ENCODE measurements at regions of chr13 and their contacts with region 1.

Region 1: DNA sequence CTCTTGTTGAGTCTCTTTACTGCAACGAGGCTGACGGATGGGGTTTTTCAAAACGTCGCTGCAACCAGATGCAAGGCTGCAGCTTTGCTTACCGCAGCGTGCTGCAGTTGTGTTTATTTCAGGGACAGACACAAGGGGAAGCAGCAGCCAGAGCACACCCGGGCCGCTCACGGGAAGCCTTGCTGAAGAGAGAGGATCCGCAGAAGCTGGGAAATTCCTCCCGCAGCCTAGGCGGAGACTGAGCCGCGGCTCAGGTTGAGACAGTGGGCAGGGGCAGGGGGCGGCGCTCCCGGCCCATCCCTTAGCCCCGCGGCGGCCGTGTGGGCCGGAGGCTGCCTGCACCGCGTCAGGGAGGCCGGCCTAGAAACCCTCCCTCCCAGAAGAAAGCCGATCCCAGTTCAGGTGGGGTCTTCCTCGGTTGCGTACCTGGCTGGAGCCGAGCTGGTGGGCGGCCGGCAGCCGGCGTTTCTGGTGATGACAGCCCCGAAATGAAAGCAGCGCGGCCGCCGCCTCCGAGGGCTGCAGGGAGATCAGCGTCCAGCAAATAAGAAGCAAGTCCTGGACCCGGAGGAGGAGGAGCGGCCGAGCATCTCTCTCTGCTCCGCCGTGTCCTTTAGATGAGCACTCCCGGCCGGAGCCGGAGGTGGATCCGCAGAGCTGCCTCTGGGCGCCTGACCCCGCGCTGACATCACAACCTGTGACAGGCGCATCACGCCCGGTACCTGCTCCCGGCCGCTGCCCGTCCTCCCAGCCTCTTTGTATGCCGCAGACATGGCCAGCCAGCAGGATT is at the start of gene FRY:
- DNase-seq: peak; percentile 93
- H3K4me3 ChIP-seq: peak within 1 kb of the TSS; percentile 75 to 85 (median 78)
- H3K27ac ChIP-seq: peak within 1 kb of the TSS; percentile 83 to 90 (median 88)
- H3K4me1 ChIP-seq: peaks cover 13 to 29% (median 23%) of the 10 kb centered on the region in 4 donors
- H3K27me3 ChIP-seq: no peaks in the 10 kb centered on the region
- CTCF ChIP-seq: peak in 2 of 3 experiments; percentile 9 to 17
- EP300 ChIP-seq: no peak
- POLR2A ChIP-seq: no peak
- total RNA-seq, gene FRY: 104 to 276 (median 135) TPM

Region 2: DNA sequence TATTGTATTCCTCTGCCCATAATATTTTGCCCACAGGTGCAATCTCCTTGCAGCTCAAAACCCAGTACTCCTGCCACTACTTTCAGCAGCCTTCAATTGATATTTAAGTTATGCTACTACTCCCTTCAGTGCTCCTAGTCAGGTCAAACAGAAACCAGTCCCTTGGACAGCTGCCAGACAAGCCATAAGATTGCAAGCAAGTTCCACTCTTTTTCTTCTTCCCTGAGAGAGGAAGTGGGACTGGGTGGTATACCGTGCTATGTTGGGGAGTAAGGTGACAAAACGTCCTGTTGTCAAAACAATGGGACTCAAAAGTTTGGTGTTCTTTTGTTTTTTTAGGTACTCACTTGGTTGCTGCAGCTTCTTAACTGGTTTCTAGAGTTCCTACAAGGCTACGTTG is 62.7 kb before region 1 on chr13:
- intact Hi-C with region 1: no loop called
- DNase-seq: no peak
- H3K4me3 ChIP-seq: no peak overlapping the region
- H3K27ac ChIP-seq: no peak overlapping the region
- H3K4me1 ChIP-seq: peaks cover 7 to 34% (median 8%) of the 10 kb centered on the region in 4 donors
- H3K27me3 ChIP-seq: no peaks in the 10 kb centered on the region
- CTCF ChIP-seq: no peak
- EP300 ChIP-seq: no peak
- POLR2A ChIP-seq: no peak

Region 3: GRCh38 chr13:32150794-32151193 is 119.6 kb after region 1 on chr13:
- intact Hi-C with region 1: loop called (anchors 10 kb)
- DNase-seq: no peak
- H3K4me3 ChIP-seq: no peak overlapping the region
- H3K27ac ChIP-seq: peak overlapping the region; percentile 61 to 79 (median 72)
- H3K4me1 ChIP-seq: peaks cover 11 to 36% (median 34%) of the 10 kb centered on the region in 4 donors
- H3K27me3 ChIP-seq: no peaks in the 10 kb centered on the region
- CTCF ChIP-seq: no peak
- EP300 ChIP-seq: no peak
- POLR2A ChIP-seq: no peak